ENCODE measurements at regions of chr1 and their contacts with region 1.

Region 1: DNA sequence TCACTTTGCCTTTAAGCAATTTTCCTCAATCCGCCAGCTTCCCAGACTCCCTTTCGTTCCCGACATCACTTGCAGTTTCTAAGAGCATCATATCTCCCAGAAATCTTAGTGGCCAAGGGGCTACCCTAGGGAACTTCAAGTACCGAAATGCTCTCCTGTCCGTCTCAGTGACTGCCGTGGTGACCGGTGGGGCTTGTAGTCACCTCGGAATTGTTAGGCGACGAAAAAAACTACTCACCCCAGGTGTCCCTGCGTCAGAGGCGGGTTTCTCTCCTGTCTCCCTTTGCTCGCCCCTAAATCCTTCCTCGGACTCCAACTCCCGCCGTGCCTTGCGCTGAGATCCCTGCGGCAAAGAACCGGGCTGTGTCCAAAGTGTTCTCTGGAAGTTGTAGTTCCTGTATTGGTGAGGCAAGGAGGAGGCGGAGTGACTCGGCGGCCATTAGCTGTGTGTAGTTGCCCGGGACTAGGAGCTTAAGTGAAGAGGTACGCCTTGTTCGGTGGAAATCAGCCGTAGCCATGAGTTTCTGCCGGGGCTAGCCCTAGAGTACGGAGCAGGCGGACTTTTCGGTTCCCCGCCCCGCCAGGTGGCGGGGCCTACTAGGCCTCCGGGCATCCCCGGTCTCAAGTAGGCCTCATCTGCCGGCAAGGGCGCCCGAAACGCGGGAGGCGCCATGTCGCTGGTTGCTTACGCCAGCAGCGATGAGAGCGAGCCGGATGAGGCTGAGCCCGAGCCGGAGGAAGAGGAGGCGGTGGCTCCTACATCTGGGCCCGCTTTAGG is at the start of gene PRCC:
- DNase-seq: peak; percentile 97
- H3K4me3 Mint-ChIP-seq: no peak within 1 kb of the TSS
- H3K27ac Mint-ChIP-seq: no peak within 1 kb of the TSS
- H3K4me1 Mint-ChIP-seq: peaks cover 46% of the 10 kb centered on the region
- H3K27me3 Mint-ChIP-seq: no peaks in the 10 kb centered on the region
- total RNA-seq, gene PRCC: 117 TPM in 2 replicates

Region 2: GRCh38 chr1:156601122-156601830 is 166.0 kb before region 1 on chr1 and contains the start of gene GPATCH4:
- intact Hi-C with region 1: loop called (anchors 5 kb)
- DNase-seq: peak; percentile 76
- H3K4me3 Mint-ChIP-seq: peak within 1 kb of the TSS; percentile 100
- H3K27ac Mint-ChIP-seq: peak within 1 kb of the TSS; percentile 99
- H3K4me1 Mint-ChIP-seq: peaks cover 37% of the 10 kb centered on the region
- H3K27me3 Mint-ChIP-seq: no peaks in the 10 kb centered on the region
- total RNA-seq, gene GPATCH4: 102 and 104 TPM in 2 replicates

Region 3: DNA sequence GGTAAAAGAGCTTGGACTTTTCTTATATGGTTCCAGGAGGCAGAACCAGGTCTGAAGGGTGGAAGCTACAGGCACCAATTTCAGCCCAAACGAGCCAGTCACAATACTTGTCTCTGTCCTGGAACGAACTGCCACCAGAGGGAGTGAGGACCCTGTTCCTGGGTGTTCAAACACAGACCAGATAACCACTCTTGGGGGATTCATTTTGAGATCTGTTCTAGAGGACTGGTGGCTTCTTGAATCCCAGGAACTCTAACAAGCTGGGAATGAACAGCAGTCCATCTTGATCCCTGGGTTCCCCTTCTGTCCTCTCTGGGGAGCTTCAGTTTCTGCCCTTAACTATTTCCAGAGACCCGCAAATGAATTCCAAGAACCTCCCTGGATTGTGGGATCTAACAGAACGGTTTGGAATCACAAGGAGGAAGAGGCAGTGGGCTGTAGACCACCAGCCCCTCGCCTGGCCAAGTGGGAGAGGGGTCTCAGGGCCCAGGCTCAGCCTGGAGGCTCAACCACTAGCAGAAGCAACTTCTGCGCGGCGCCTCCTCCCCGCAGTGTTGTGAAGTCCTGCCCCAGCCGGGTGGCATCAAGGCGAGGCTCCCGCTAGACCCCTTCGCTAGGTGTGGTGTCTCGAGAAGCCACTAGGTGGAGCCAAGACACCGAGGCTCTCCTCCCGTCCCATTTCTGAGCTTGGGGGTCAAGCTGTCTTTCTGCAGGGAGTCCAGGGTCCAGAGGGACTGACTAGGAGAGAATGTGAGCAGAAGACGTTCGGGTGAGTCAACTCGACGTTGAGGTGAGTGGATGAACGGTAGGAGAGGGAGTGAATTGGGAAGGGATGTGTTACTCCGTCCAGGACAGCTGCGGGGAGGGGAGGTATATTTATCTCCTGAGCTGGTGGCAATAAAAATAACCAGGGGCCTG is 78.0 kb before region 1 on chr1:
- intact Hi-C with region 1: loop called (anchors 5 kb)
- DNase-seq: peak; percentile 64
- H3K4me3 Mint-ChIP-seq: peak overlapping the region; percentile 69
- H3K27ac Mint-ChIP-seq: no peak overlapping the region
- H3K4me1 Mint-ChIP-seq: peaks cover 32% of the 10 kb centered on the region
- H3K27me3 Mint-ChIP-seq: peaks cover 54% of the 10 kb centered on the region

Region 4: DNA sequence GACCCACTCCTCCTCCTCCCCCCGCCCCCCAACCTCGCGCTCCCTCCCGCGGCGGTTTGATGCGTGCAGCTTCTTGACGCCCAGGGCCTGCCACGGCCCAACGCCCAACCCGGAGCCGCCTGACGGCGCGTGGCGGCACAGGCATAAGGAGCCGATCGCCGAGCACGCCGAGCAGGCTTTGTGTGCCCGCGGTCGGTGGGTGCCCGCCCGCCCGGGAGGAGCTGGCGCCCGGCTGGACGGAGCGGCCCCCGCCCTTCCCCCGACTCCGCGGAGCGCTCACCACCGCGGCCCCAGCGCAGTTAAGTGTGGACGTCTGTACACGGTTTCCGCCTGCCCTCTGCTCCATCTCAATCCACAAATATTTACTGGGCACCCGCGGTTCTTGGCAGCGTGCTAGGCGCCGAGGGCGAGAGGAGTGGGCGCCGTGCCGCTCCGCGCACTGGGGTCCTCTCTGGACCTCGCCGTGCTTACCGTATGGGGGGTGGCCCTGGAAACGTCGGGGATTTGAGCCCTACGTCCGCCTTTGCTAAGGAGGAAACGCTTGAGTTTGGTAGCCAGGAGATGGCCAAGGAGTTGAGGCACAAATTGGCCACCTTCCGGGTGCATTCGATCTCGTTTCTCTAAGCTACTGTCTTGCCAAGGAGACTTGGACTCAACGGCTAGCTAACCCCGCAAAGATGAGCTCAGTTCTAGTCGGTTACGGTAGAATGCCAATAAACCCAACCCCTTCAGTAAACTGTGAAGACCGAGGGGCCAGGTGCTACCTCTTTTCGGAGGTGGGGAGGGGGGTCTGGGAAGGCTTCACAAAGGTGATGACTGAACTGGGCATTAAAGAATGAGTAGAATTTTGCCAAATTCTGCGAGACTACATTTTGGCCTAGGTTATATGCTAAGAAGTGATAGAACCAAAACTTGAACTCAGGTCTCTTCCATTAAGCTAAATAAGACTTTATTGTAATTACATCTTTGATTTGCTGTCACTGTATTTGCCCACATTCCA is 15.2 kb before region 1 on chr1:
- intact Hi-C with region 1: loop called (anchors 1 kb)
- DNase-seq: peak; percentile 94
- H3K4me3 Mint-ChIP-seq: peak overlapping the region; percentile 97
- H3K27ac Mint-ChIP-seq: peak overlapping the region; percentile 94
- H3K4me1 Mint-ChIP-seq: peaks cover 55% of the 10 kb centered on the region
- H3K27me3 Mint-ChIP-seq: peaks cover 1% of the 10 kb centered on the region

Region 5: GRCh38 chr1:156801409-156802121 is 34.3 kb after region 1 on chr1:
- intact Hi-C with region 1: no loop called
- DNase-seq: no peak
- H3K4me3 Mint-ChIP-seq: peak overlapping the region; percentile 0
- H3K27ac Mint-ChIP-seq: peak overlapping the region; percentile 64
- H3K4me1 Mint-ChIP-seq: peaks cover 57% of the 10 kb centered on the region
- H3K27me3 Mint-ChIP-seq: no peaks in the 10 kb centered on the region

Region 6: DNA sequence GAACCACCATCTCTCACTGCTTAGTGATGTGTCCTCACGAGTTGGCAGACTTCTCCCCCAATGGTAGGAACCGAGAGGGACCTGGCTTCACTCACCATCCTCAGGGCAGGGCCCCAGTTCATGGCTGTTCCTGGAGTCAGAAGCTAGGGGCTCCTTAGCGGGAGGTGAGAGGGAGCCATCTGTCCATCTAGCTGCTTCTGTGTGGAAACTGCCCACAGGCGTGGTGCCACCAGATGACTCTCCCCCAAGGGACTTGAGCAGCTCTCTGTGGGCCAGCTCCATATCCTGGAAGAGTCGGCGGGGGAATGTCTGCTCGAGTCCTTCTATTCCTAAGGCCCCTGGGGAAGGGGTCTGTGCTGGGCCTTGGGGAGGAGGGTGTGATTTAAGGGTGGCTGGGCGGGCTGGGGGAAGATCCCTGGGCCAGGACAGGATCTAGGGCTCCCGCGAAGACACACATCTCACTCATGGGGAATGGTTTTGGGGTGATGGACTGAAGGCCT is 169.5 kb after region 1 on chr1:
- intact Hi-C with region 1: no loop called
- DNase-seq: no peak
- H3K4me3 Mint-ChIP-seq: no peak overlapping the region
- H3K27ac Mint-ChIP-seq: no peak overlapping the region
- H3K4me1 Mint-ChIP-seq: no peaks in the 10 kb centered on the region
- H3K27me3 Mint-ChIP-seq: peaks cover 3% of the 10 kb centered on the region